ENCODE measurements at regions of chr9 and their contacts with region 1.

Region 1: GRCh38 chr9:128818099-128818838 is at the start of gene ENDOG:
- H3K4me3 ChIP-seq: peak within 1 kb of the TSS; percentile 60
- H3K27ac ChIP-seq: peak within 1 kb of the TSS; percentile 74
- H3K4me1 ChIP-seq: no peaks in the 10 kb centered on the region
- CTCF ChIP-seq: peak; percentile 99

Region 2: DNA sequence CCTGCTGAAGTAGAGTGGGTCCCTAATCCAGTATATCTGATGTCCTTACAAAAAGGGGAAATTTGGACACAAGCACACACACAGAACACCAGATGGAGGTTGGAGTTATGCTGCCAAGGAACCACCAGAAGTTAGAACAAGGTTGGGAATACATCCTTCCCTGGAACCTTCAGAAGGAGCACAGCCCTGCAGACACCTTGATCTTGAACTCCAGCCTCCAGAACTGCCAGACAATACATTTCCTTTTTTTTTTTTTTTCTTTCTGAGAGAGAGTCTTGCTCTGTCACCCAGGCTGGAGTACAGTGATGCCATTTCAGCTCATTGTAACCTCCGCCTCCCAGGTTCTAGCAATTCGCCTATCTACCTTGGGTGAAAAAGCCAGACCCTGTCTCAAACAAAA is 369.5 kb before region 1 on chr9:
- CTCF ChIA-PET with region 1: no interaction called
- POLR2A ChIA-PET with region 1: no interaction called
- H3K4me3 ChIP-seq: no peak overlapping the region
- H3K27ac ChIP-seq: no peak overlapping the region
- H3K4me1 ChIP-seq: no peaks in the 10 kb centered on the region
- CTCF ChIP-seq: no peak

Region 3: GRCh38 chr9:128712451-128713410 is 105.5 kb before region 1 on chr9:
- CTCF ChIA-PET with region 1: no interaction called
- POLR2A ChIA-PET with region 1: no interaction called
- H3K4me3 ChIP-seq: no peak overlapping the region
- H3K27ac ChIP-seq: no peak overlapping the region
- H3K4me1 ChIP-seq: no peaks in the 10 kb centered on the region
- CTCF ChIP-seq: no peak

Region 4: GRCh38 chr9:128787604-128788041 is 30.6 kb before region 1 on chr9:
- CTCF ChIA-PET with region 1: interaction called, 9 read pairs
- POLR2A ChIA-PET with region 1: interaction called, 10 read pairs
- H3K4me3 ChIP-seq: peak overlapping the region; percentile 74
- H3K27ac ChIP-seq: peak overlapping the region; percentile 66
- H3K4me1 ChIP-seq: no peaks in the 10 kb centered on the region
- CTCF ChIP-seq: no peak

Region 5: GRCh38 chr9:128800061-128800460 is 18.2 kb before region 1 on chr9:
- CTCF ChIA-PET with region 1: interaction called, 6 read pairs
- POLR2A ChIA-PET with region 1: interaction called, 10 read pairs
- H3K4me3 ChIP-seq: no peak overlapping the region
- H3K27ac ChIP-seq: no peak overlapping the region
- H3K4me1 ChIP-seq: no peaks in the 10 kb centered on the region
- CTCF ChIP-seq: no peak

Region 6: DNA sequence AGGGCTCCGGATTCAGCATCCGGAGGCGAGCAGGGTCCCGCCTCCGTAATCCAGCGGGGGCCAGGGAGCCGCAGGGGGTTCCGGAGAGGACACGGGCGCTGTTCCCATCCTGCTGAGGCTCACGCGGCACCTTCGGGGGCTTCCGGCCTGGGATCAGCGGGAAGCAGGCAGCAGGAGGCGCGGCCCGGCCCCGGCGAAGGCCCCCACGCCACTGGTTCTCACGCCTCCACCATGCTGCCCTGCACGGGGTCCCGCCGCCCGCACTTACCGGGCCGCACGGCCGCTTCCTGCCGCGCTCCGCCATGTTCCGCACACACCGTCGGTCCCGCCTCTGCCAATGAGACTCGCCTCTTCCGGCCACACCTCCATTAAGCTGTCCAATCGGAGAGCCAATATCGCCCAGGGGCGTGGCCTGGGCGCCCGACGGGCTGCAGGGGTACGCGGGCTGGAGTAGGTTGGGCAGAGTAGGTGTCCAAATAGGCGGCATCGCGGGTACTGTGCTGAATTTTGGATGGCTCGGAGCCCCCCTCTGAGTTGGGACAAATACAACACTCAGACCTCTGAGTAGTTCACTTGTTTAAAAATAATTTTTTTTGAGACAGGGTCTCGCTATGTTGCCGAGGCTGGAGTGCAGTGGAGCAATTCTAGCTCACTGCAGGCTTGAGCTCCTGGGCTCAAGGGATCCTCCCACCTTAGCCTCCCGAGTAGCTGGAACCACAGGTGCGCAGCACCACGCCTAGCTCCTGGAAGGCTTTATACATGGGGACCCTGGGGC is 11.4 kb after region 1 on chr9 and contains the start of gene SPOUT1:
- CTCF ChIA-PET with region 1: interaction called, 12 read pairs
- POLR2A ChIA-PET with region 1: interaction called, 94 read pairs
- H3K4me3 ChIP-seq: peak within 1 kb of the TSS; percentile 86
- H3K27ac ChIP-seq: peak within 1 kb of the TSS; percentile 63; the same call in 1 of the 2 replicates
- H3K4me1 ChIP-seq: no peaks in the 10 kb centered on the region
- CTCF ChIP-seq: no peak; the same call in 1 of the 2 replicates

Region 7: DNA sequence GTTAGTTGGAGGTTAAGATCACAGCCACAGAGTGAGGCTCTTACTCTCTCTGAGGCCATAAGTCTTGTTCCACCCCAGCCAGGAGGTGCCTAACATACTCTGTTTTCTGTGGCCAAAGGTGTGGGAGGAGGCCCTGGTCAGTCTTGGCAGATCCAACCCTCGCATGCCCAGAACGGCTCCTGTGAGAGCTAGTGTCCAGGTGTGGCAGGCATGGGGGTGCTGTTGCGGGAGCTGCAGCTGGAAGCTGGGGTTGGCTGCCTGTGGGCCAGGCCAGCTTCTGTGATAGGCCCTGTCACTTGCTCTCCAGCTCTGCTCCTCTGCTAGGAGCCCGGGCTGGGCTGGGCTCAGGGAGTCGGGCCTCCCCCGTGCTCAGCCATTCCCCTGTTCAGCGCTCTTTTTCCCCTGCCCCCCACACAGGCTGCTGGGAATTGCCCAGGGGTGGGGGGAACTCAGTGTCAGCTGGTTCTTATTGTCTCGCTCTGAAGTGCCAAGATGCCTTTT is 328.2 kb after region 1 on chr9:
- CTCF ChIA-PET with region 1: no interaction called
- POLR2A ChIA-PET with region 1: no interaction called
- H3K4me3 ChIP-seq: no peak overlapping the region
- H3K27ac ChIP-seq: no peak overlapping the region
- H3K4me1 ChIP-seq: no peaks in the 10 kb centered on the region
- CTCF ChIP-seq: no peak